Natural killer cell (primary cell): ENCODE measurements at regions of chr10 and their contacts with region 1.

Region 1: GRCh38 chr10:71771821-71772617 is 1.3 kb downstream of the VSIR start:
- DNase-seq: peak in 1 of 2 donors; percentile 43
- ATAC-seq: no peak
- H3K4me3 ChIP-seq: peak overlapping the region; percentile 95
- H3K4me3 Mint-ChIP-seq: peak overlapping the region; percentile 85
- H3K27ac ChIP-seq: peak overlapping the region; percentile 96
- H3K27ac Mint-ChIP-seq: peak overlapping the region; percentile 98
- H3K4me1 ChIP-seq: peaks cover 94% of the 10 kb centered on the region
- H3K4me1 Mint-ChIP-seq: peaks cover 66 to 84% of the 10 kb centered on the region in 2 donors
- H3K27me3 ChIP-seq: no peaks in the 10 kb centered on the region
- H3K27me3 Mint-ChIP-seq: no peaks in the 10 kb centered on the region
- CTCF ChIP-seq: no peak

Region 2: GRCh38 chr10:71727738-71728737 is 44.0 kb before region 1 on chr10:
- intact Hi-C with region 1: loop called (anchors 2 kb)
- DNase-seq: peak; percentile 53 to 91
- ATAC-seq: peak; percentile 53 to 80 (median 68)
- H3K4me3 ChIP-seq: peak overlapping the region; percentile 0
- H3K4me3 Mint-ChIP-seq: peak overlapping the region; percentile 81
- H3K27ac ChIP-seq: peak overlapping the region; percentile 91
- H3K27ac Mint-ChIP-seq: peak overlapping the region; percentile 90
- H3K4me1 ChIP-seq: peaks cover 93% of the 10 kb centered on the region
- H3K4me1 Mint-ChIP-seq: peaks cover 52 to 71% of the 10 kb centered on the region in 2 donors
- H3K27me3 ChIP-seq: no peaks in the 10 kb centered on the region
- H3K27me3 Mint-ChIP-seq: no peaks in the 10 kb centered on the region
- CTCF ChIP-seq: no peak

Region 3: DNA sequence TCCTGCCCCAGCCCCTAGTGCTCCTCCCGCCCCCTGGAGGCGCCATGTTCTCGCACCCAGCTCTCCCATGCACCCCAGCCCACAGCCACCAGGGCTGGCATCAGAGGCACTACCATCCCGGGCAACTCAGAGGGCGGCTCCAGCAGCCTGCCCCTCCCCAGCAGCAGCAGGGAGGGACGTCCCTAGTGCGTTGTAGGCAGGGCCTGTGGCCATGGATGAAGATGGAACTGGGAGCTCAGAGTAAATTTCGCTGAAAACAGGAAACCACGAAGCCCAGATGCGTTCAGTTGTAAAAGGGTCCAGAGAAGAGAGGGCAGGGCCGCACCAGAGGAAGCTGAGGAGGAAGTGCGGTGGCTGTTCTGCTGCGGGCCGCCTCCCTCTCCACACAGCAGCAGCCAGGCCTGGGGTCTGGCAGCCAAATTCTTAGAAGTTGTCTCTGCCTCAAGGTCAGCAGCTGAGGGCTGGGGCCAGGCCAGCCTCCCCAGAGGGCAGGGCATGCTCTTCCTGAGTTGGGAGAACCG is 23.3 kb before region 1 on chr10:
- intact Hi-C with region 1: loop called (anchors 2 kb)
- DNase-seq: peak; percentile 52 to 90
- ATAC-seq: peak; percentile 75 to 88 (median 80)
- H3K4me3 ChIP-seq: no peak overlapping the region
- H3K4me3 Mint-ChIP-seq: peak overlapping the region; percentile 84
- H3K27ac ChIP-seq: peak overlapping the region; percentile 81
- H3K27ac Mint-ChIP-seq: peak overlapping the region; percentile 96
- H3K4me1 ChIP-seq: peaks cover 99% of the 10 kb centered on the region
- H3K4me1 Mint-ChIP-seq: peaks cover 87 to 95% of the 10 kb centered on the region in 2 donors
- H3K27me3 ChIP-seq: no peaks in the 10 kb centered on the region
- H3K27me3 Mint-ChIP-seq: no peaks in the 10 kb centered on the region
- CTCF ChIP-seq: no peak

Region 4: GRCh38 chr10:71850637-71851464 is 78.8 kb after region 1 on chr10 and contains the start of gene PSAP:
- intact Hi-C with region 1: loop called (anchors 2 kb)
- DNase-seq: peak; percentile 98 to 99
- ATAC-seq: peak; percentile 96 to 98 (median 97)
- H3K4me3 ChIP-seq: peak within 1 kb of the TSS; percentile 89
- H3K4me3 Mint-ChIP-seq: peak within 1 kb of the TSS; percentile 97
- H3K27ac ChIP-seq: peak within 1 kb of the TSS; percentile 70
- H3K27ac Mint-ChIP-seq: peak within 1 kb of the TSS; percentile 90 to 91
- H3K4me1 ChIP-seq: peaks cover 29% of the 10 kb centered on the region
- H3K4me1 Mint-ChIP-seq: peaks cover 44 to 48% of the 10 kb centered on the region in 2 donors
- H3K27me3 ChIP-seq: no peaks in the 10 kb centered on the region
- H3K27me3 Mint-ChIP-seq: no peaks in the 10 kb centered on the region
- CTCF ChIP-seq: no peak
- total RNA-seq, gene PSAP: 324 to 488 (median 428) TPM

Region 5: GRCh38 chr10:71912431-71912830 is 140.4 kb after region 1 on chr10:
- intact Hi-C with region 1: no loop called
- DNase-seq: no peak
- ATAC-seq: no peak
- H3K4me3 ChIP-seq: no peak overlapping the region
- H3K4me3 Mint-ChIP-seq: no peak overlapping the region
- H3K27ac ChIP-seq: no peak overlapping the region
- H3K27ac Mint-ChIP-seq: no peak overlapping the region
- H3K4me1 ChIP-seq: peaks cover 18% of the 10 kb centered on the region
- H3K4me1 Mint-ChIP-seq: peaks cover 15 to 25% of the 10 kb centered on the region in 2 donors
- H3K27me3 ChIP-seq: no peaks in the 10 kb centered on the region
- H3K27me3 Mint-ChIP-seq: peaks cover 0 to 2% of the 10 kb centered on the region in 2 donors
- CTCF ChIP-seq: no peak